ENCODE measurements at regions of chr3 and their contacts with region 1.

Region 1: GRCh38 chr3:11846281-11847034 is at the start of gene TAMM41:
- DNase-seq: peak; percentile 95
- ATAC-seq: peak; percentile 100
- H3K4me3 Mint-ChIP-seq: peak within 1 kb of the TSS; percentile 97
- H3K27ac Mint-ChIP-seq: peak within 1 kb of the TSS; percentile 91
- H3K4me1 Mint-ChIP-seq: peaks cover 31% of the 10 kb centered on the region
- H3K27me3 Mint-ChIP-seq: no peaks in the 10 kb centered on the region
- total RNA-seq, gene TAMM41: 26.3 to 30.2 TPM

Region 2: DNA sequence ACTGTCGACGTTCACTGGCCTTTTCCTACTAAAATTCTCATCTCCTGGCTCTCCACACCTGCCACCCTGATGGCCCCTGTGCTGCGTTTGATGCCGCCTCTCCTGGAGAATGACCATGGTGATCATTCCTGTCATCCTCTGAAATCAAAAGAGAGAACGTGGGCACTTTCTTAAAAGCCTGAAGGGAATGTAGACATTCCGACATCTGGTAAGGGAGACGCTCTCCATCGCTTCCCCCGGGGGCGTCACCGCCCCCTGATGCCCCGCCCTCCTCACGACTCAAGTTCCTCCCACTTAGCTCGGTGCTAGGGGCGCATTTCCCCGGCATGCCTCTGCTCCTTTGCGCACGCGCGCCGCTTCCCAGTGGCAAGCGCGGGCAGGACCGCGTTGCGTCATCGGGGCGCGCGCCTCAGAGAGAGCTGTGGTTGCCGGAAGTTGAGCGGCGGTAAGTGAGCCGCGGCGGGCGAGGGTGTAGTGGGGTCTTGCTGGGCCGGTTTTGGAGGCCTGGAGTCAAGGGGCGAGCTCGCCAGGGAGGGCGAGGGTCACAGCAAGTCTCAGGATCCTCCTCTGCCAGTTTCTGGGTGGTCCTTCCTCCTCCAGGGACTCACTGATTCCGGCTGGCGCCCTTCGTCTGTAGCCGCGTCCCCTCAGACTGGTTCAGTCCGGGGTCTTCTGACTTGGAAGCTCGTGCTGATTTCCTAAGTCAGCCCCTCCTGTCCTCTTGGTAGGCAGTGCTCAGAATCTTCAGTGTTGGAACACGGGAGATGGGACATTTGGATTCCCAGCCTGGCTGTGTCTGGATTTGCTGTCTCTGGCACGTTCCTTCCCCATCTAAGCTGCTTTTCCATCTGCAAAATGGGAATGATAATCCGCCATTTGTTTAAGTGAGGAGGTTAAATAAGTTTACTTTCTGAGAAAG is 574.2 kb before region 1 on chr3 and contains the start of gene ATG7:
- CTCF ChIA-PET with region 1: no interaction called
- POLR2A ChIA-PET with region 1: no interaction called
- intact Hi-C with region 1: loop called in 1 of 2 experiments (anchors 1 kb)
- DNase-seq: peak; percentile 98
- ATAC-seq: peak; percentile 97
- H3K4me3 Mint-ChIP-seq: peak within 1 kb of the TSS; percentile 93
- H3K27ac Mint-ChIP-seq: peak within 1 kb of the TSS; percentile 94
- H3K4me1 Mint-ChIP-seq: peaks cover 45% of the 10 kb centered on the region
- H3K27me3 Mint-ChIP-seq: no peaks in the 10 kb centered on the region
- total RNA-seq, gene ATG7: 31.6 to 34.5 TPM

Region 3: GRCh38 chr3:11820531-11821041 is 25.9 kb before region 1 on chr3:
- CTCF ChIA-PET with region 1: interaction called, 4 read pairs
- POLR2A ChIA-PET with region 1: no interaction called
- intact Hi-C with region 1: loop called in 1 of 2 experiments (anchors 2 kb)
- DNase-seq: peak; percentile 57
- ATAC-seq: peak; percentile 91
- H3K4me3 Mint-ChIP-seq: no peak overlapping the region
- H3K27ac Mint-ChIP-seq: peak overlapping the region; percentile 4
- H3K4me1 Mint-ChIP-seq: peaks cover 14% of the 10 kb centered on the region
- H3K27me3 Mint-ChIP-seq: no peaks in the 10 kb centered on the region

Region 4: DNA sequence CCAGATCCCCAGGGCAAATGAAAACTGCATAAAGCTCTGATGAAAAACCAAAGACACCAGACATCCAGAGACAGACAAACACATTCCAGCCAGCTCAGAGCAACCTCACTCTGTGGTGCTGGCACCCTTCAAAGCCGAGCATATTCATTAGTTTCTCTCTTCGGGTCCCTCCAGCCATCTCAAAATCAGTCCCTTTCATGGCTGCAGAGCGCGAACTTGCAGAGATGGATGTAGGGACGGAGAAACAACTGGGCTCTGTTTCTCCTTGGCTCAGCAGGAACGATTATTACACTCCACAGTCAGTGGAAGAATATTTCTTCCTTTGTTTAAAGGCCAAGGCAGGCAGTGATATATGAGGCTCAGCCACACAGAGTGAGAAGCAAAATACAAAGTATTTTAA is 107.3 kb after region 1 on chr3:
- CTCF ChIA-PET with region 1: no interaction called
- POLR2A ChIA-PET with region 1: no interaction called
- intact Hi-C with region 1: no loop called
- DNase-seq: no peak
- ATAC-seq: no peak
- H3K4me3 Mint-ChIP-seq: no peak overlapping the region
- H3K27ac Mint-ChIP-seq: no peak overlapping the region
- H3K4me1 Mint-ChIP-seq: no peaks in the 10 kb centered on the region
- H3K27me3 Mint-ChIP-seq: peaks cover 9% of the 10 kb centered on the region

Region 5: GRCh38 chr3:12004741-12005513 is 158.5 kb after region 1 on chr3:
- CTCF ChIA-PET with region 1: no interaction called
- POLR2A ChIA-PET with region 1: no interaction called
- intact Hi-C with region 1: no loop called
- DNase-seq: peak; percentile 11
- ATAC-seq: no peak
- H3K4me3 Mint-ChIP-seq: no peak overlapping the region
- H3K27ac Mint-ChIP-seq: no peak overlapping the region
- H3K4me1 Mint-ChIP-seq: no peaks in the 10 kb centered on the region
- H3K27me3 Mint-ChIP-seq: peaks cover 51% of the 10 kb centered on the region

Measured in activated CD4-positive, alpha-beta T cell treated with anti-CD3 and anti-CD28 coated beads for 36 hours (primary cell).